ENCODE measurements at regions of chr1 and their contacts with region 1.

Region 1: DNA sequence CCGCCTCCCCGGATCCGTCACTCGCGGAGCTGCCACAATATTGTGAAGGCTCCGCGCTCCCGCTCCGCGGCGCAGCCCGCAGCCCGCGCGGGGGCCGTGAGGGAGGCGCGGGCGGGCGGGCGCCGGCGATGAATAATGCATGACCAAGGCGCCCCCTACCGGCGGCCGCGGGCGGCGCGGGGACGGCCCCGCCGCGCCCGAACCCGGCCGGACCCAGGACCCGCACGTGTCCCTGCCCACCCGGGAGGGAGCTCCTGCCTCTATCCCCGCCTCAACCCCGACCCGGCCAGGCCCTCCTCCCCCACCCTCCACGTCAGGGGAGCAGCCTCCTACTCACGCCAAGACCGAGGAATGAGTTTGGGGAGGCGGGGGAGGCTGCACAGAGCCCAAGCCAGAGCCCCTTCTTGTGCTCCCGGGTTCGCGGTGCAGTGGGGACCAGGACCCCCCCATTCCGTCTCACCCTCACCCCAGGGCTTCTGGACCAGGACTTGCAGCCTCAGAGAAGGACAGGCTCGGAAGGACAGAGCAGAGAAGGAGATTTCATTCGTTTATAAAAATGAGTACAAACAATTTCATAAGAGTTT is 70.8 kb upstream of the CASZ1 start:
- DNase-seq: peak; percentile 83
- H3K4me3 ChIP-seq: peak overlapping the region; percentile 66
- H3K27ac ChIP-seq: no peak overlapping the region
- H3K4me1 ChIP-seq: no peaks in the 10 kb centered on the region
- H3K27me3 ChIP-seq: peaks cover 33% of the 10 kb centered on the region

Region 2: DNA sequence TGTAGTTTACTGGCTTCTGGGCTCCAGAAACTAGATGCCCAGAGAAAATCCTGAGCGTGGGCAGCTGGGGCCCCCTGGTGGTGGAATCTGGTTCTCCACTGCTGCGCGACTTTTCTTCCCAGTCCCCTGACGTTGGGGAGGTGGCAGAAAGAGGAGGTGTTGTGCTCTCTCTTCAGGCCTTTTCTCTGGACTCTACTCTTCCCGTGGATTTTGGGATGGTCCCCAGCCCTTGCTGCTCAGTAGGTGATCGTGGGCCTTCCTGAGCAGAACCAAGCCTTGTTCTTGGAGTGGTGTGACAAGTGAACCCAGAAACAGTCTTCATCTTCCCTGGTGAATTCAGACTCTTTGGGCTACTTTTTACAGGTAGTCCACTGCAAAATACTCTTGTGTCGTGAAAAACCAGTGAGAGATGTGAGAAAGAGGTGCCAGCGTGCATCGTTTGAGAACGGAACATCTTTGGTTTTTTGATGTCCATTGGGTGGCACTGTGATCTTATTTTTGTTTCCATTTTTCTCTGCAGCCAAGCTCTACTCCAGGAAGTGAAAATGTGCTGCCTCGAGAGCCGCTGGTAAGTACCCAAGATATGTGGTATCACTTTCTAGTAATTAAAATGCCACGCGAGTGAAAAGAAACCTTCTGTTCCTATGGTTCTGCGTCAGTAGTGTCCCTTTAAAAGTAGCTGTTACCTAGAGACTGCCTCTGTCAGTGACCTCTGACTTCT is 372.3 kb before region 1 on chr1:
- in situ Hi-C with region 1: loop called (anchors 5 kb)
- DNase-seq: peak; percentile 78
- H3K4me3 ChIP-seq: peak overlapping the region; percentile 72
- H3K27ac ChIP-seq: peak overlapping the region; percentile 45
- H3K4me1 ChIP-seq: peaks cover 10% of the 10 kb centered on the region
- H3K27me3 ChIP-seq: no peaks in the 10 kb centered on the region

Region 3: GRCh38 chr1:10514490-10515235 is 352.6 kb before region 1 on chr1:
- in situ Hi-C with region 1: loop called (anchors 5 kb)
- DNase-seq: peak; percentile 63
- H3K4me3 ChIP-seq: no peak overlapping the region
- H3K27ac ChIP-seq: no peak overlapping the region
- H3K4me1 ChIP-seq: peaks cover 28% of the 10 kb centered on the region
- H3K27me3 ChIP-seq: no peaks in the 10 kb centered on the region

Region 4: GRCh38 chr1:10736634-10737586 is 130.3 kb before region 1 on chr1:
- in situ Hi-C with region 1: no loop called
- DNase-seq: no peak
- H3K4me3 ChIP-seq: no peak overlapping the region
- H3K27ac ChIP-seq: no peak overlapping the region
- H3K4me1 ChIP-seq: no peaks in the 10 kb centered on the region
- H3K27me3 ChIP-seq: peaks cover 29% of the 10 kb centered on the region

Measured in GM23248 (cell line).